Posterior cingulate gyrus (tissue), 11 donors: ENCODE measurements at regions of chr1 and their contacts with region 1.

Region 1: DNA sequence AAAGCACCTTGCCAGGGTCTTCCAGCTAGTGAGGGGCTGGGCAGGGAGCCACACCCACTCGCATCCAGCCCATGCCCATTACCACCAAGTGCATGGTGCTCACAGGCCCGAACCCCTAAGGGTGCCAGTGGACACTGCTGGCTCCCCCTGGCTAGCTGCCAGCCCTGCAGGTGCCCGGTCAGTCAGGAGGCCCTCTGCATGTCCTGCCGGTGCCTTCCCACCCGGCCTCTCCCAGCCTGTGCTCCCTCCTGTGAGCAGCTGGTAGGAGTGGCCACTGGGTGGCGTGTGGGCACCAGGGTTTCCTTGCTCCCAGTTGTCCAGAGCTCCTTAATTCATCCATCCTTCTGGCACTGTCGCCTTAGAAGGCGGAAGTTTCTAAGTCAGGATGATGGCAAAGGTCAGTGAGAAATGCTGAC is 33.4 kb downstream of the QSOX1 start:
- DNase-seq: peak; percentile 34 to 95 (median 64)

Region 2: GRCh38 chr1:180229974-180230790 is 42.1 kb after region 1 on chr1 and contains the start of gene LHX4:
- intact Hi-C with region 1: no loop called
- DNase-seq: peak in 2 of 10 donors; percentile 46 to 59

Region 3: GRCh38 chr1:180415985-180416633 is 228.0 kb after region 1 on chr1:
- intact Hi-C with region 1: loop called (anchors 2 kb)
- DNase-seq: no peak

Region 4: DNA sequence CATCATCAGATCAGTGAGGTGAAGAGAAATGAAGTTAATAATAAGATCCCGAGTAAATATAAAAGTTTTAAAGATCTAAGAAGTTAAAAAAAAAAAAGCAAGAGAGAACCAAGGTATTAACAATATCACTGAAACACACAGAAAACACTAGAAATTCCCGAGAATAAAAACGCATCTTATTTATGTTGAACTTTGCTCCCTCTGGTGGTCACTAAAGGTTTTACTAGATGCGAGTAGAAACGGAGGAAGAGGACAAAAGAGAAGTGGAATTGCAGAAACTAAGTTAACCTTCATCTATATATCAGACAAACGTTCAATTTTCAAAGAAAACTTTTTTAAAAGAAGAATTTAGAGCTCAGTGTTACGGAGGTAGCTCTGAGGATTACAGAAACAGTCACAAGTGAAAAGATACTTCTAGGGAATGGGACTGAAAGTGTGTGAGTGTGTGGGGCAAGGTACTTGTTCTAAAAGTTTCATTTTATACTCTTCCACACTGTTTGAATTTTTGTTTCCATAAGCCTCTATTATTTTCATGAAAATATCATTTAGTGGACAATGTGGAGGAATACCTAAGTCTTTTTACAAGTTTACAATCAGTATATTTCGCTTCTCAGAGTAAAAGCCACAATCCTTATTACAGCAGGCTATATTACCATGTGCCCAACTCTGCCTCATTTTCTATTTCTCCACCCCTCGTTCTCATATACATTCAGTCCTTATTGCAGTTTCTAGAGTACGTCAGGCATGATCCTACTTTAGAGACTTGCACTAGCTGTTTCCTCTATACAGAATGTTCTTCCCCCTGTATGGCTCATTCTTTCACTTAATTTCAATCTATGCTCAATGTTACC is 294.6 kb after region 1 on chr1:
- intact Hi-C with region 1: loop called (anchors 5 kb)
- DNase-seq: no peak